ENCODE measurements at regions of chr11 and their contacts with region 1.

Region 1: DNA sequence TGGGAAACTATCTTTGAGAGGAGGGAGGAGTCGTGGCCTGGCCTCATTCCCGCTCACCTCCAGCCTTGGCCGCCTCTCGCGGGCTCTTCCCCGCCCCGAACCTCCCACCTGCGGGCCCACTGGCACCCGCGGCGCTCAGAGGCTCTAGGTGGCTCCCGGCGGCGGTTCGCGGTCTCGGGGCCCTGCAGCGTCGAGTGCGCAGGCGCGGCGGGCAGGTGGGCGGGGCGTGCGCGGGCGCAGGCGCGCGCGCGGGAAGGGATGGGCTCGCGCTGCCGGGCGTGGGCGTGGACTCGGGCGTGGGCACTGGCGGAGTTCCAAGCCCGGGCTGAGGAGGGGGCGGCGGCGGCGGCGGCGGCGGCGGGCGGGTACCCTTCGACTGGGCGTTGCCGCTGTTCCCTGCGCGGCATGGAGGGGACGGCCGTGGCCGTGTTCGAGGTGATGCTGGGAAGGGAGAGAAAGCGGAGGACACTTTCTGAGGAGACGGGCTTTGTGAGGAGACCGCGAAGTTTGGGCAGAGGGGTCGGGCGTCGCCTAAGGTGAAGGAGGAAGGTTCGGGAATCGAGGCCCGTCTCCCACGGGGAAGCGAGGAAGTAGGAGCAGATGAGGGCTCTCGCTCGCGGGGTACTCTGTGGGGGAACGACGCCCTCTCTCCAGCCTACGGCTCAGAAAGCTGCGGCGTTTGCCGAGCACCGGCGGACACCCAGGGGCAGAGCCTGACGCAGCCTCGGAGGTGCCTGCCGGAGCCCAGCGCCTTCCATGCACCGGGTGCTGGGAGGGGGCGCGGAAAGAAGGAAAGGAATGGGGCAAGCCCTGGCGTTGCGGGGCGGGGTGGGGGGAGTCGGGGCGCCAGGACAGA is 15.7 kb upstream of the SPTBN2 start:
- DNase-seq: peak; percentile 85
- H3K4me3 Mint-ChIP-seq: peak overlapping the region; percentile 95
- H3K27ac Mint-ChIP-seq: peak overlapping the region; percentile 50
- H3K4me1 Mint-ChIP-seq: peaks cover 1% of the 10 kb centered on the region
- H3K27me3 Mint-ChIP-seq: no peaks in the 10 kb centered on the region

Region 2: DNA sequence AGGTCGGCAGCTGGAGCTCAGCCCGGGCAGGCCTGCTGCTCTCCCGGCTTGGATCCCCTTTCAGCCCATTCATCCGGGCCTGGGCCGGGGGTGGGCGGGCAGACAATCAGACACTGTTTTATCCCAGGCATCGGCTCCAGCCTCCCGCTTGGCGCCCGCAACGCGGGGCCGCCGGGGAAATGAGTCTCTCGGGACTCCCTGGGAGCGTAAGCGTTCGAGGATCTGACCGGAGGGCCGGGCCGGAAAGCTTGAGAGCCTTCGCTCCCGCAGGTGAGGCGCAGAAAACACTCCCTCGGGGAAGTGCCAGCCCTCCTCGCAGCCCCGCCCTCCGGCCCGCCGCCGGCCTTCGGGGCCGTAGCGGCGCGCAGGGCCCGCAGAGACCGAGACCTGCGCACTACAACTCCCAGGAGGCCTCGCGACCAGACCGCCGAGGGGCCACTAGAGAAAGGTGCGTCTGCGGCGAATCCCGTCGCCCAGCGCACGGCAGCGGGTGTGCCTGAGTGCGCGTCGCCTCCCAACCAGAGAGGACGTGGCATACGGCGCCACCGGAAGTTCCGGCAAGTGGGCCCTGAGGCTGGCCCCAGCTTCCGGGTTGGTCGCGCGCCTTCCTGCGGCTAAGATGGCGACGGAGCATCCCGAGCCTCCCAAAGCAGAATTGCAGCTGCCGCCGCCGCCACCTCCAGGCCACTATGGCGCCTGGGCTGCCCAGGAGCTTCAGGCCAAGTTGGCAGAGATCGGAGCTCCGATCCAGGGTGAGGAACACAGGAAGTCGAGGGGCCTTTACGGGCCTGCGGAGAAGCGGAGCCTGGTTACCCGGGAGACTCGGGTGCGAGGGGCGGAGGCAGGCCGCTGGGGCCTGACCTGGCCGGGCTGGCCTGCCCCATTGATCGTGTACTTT is 692.7 kb before region 1 on chr11 and contains the start of gene SF3B2:
- CTCF ChIA-PET with region 1: no interaction called
- intact Hi-C with region 1: no loop called
- DNase-seq: peak; percentile 98
- H3K4me3 Mint-ChIP-seq: peak within 1 kb of the TSS; percentile 99
- H3K27ac Mint-ChIP-seq: peak within 1 kb of the TSS; percentile 96
- H3K4me1 Mint-ChIP-seq: peaks cover 41% of the 10 kb centered on the region
- H3K27me3 Mint-ChIP-seq: peaks cover 7% of the 10 kb centered on the region
- total RNA-seq, gene SF3B2: 319 to 321 TPM

Region 3: GRCh38 chr11:66727282-66727882 is 17.3 kb before region 1 on chr11:
- CTCF ChIA-PET with region 1: interaction called, 4 read pairs
- intact Hi-C with region 1: loop called (anchors 2 kb)
- DNase-seq: peak; percentile 43
- H3K4me3 Mint-ChIP-seq: peak overlapping the region; percentile 65
- H3K27ac Mint-ChIP-seq: no peak overlapping the region
- H3K4me1 Mint-ChIP-seq: peaks cover 14% of the 10 kb centered on the region
- H3K27me3 Mint-ChIP-seq: peaks cover 57% of the 10 kb centered on the region

Measured in activated naive CD4-positive, alpha-beta T cell treated with anti-CD3 and anti-CD28 coated beads for 36 hours (primary cell).